Vagina (tissue), 2 donors: ENCODE measurements at regions of chr5 and their contacts with region 1.

Region 1: GRCh38 chr5:167723254-167723871 is 568.1 kb upstream of the WWC1 start:
- DNase-seq: no peak
- H3K4me3 ChIP-seq: no peak overlapping the region
- H3K27ac ChIP-seq: no peak overlapping the region
- H3K4me1 ChIP-seq: peaks cover 6% of the 10 kb centered on the region
- H3K27me3 ChIP-seq: no peaks in the 10 kb centered on the region
- CTCF ChIP-seq: peak; percentile 71 to 83 (median 77)
- POLR2A ChIP-seq: no peak

Region 2: DNA sequence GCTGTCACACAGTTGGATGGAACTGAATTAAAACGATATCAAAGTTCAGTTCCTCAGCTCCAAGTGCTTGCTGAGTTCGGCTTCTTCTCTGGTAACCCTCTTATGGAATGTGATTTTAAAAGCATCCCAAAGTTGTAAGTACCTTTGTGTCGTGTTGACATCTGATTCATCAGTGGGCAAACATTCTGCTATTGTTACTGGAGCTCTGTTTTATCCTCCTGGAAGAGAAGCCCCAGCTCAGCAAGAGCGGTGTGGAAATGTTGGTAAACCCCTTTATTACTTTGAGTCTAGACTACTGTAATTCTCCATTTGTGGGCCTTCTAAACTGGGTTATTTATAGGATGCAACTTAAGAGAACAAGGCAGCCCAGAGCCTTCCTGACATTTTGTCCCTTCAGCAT is 131.2 kb before region 1 on chr5:
- intact Hi-C with region 1: no loop called
- DNase-seq: no peak
- H3K4me3 ChIP-seq: no peak overlapping the region
- H3K27ac ChIP-seq: no peak overlapping the region
- H3K4me1 ChIP-seq: no peaks in the 10 kb centered on the region
- H3K27me3 ChIP-seq: no peaks in the 10 kb centered on the region
- CTCF ChIP-seq: no peak
- POLR2A ChIP-seq: no peak

Region 3: DNA sequence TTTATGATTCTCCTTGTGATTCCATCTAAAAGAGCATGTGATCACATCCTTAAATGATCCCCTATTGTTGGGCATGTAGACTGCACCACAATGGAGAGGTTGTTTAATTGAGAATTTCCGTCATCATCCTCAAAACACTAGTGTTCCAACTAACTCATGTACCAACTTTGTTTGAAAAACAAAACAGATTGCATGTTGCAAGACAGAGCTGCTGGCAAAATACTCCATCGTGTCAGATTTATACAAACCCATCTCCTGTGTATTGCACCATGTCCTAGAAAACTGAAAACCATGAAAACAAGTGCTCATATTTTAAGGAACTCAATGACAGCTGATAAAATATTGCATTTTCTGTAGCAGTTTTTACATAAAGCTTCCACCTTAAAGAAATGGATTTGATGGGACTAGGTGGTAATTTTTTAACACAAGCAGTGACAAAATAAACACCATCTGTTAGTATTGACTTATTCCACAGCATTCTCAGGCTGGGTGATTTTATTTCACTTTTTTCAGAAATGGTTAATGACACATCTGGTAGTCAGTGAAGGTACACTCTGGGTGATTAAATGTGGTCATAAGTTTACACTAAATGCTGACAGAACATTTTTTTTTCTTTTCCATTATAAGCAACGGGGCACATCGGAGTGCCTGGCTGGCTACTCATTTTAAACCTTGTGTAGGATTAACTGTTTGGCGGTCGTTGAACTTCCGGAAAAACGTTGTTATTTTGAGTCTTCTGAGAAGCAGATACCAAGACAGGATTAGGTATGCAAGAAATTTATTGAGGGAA is 34.8 kb before region 1 on chr5:
- intact Hi-C with region 1: no loop called
- DNase-seq: no peak
- H3K4me3 ChIP-seq: no peak overlapping the region
- H3K27ac ChIP-seq: no peak overlapping the region
- H3K4me1 ChIP-seq: no peaks in the 10 kb centered on the region
- H3K27me3 ChIP-seq: no peaks in the 10 kb centered on the region
- CTCF ChIP-seq: no peak
- POLR2A ChIP-seq: no peak

Region 4: GRCh38 chr5:168219515-168220410 is 496.4 kb after region 1 on chr5:
- intact Hi-C with region 1: loop called (anchors 5 kb)
- DNase-seq: no peak
- H3K4me3 ChIP-seq: no peak overlapping the region
- H3K27ac ChIP-seq: no peak overlapping the region
- H3K4me1 ChIP-seq: peaks cover 6% of the 10 kb centered on the region
- H3K27me3 ChIP-seq: no peaks in the 10 kb centered on the region
- CTCF ChIP-seq: peak; percentile 74 to 83 (median 74)
- POLR2A ChIP-seq: no peak